Aorta (tissue), 5 donors: ENCODE measurements at regions of chr11 and their contacts with region 1.

Region 1: GRCh38 chr11:120432056-120433018 is 79.2 kb upstream of the GRIK4 start:
- DNase-seq: no peak
- ATAC-seq: peak; percentile 92
- H3K4me3 ChIP-seq: no peak overlapping the region
- H3K27ac ChIP-seq: peak overlapping the region in 1 of 2 donors; percentile 67
- H3K4me1 ChIP-seq: peaks cover 0 to 3% of the 10 kb centered on the region in 2 donors
- H3K27me3 ChIP-seq: no peaks in the 10 kb centered on the region

Region 2: GRCh38 chr11:120335908-120336640 is 96.3 kb before region 1 on chr11 and contains the start of gene ARHGEF12:
- intact Hi-C with region 1: loop called (anchors 2 to 5 kb)
- DNase-seq: peak; percentile 98 to 99
- ATAC-seq: peak; percentile 90
- H3K4me3 ChIP-seq: peak within 1 kb of the TSS; percentile 80 to 81
- H3K27ac ChIP-seq: peak within 1 kb of the TSS; percentile 81 to 97
- H3K4me1 ChIP-seq: peaks cover 5% of the 10 kb centered on the region in 2 donors
- H3K27me3 ChIP-seq: no peaks in the 10 kb centered on the region
- total RNA-seq, gene ARHGEF12: 126 to 143 TPM